ENCODE measurements at regions of chr3 and their contacts with region 1.

Region 1: GRCh38 chr3:17233398-17233800 is 348.6 kb downstream of the PLCL2 start:
- DNase-seq: peak; percentile 84
- H3K4me3 Mint-ChIP-seq: no peak overlapping the region
- H3K27ac Mint-ChIP-seq: no peak overlapping the region
- H3K4me1 Mint-ChIP-seq: peaks cover 12% of the 10 kb centered on the region
- H3K27me3 Mint-ChIP-seq: no peaks in the 10 kb centered on the region

Region 2: GRCh38 chr3:16828815-16829214 is 404.6 kb before region 1 on chr3:
- intact Hi-C with region 1: loop called (anchors 5 kb)
- DNase-seq: peak; percentile 84
- H3K4me3 Mint-ChIP-seq: no peak overlapping the region
- H3K27ac Mint-ChIP-seq: no peak overlapping the region
- H3K4me1 Mint-ChIP-seq: peaks cover 16% of the 10 kb centered on the region
- H3K27me3 Mint-ChIP-seq: peaks cover 9% of the 10 kb centered on the region

Region 3: DNA sequence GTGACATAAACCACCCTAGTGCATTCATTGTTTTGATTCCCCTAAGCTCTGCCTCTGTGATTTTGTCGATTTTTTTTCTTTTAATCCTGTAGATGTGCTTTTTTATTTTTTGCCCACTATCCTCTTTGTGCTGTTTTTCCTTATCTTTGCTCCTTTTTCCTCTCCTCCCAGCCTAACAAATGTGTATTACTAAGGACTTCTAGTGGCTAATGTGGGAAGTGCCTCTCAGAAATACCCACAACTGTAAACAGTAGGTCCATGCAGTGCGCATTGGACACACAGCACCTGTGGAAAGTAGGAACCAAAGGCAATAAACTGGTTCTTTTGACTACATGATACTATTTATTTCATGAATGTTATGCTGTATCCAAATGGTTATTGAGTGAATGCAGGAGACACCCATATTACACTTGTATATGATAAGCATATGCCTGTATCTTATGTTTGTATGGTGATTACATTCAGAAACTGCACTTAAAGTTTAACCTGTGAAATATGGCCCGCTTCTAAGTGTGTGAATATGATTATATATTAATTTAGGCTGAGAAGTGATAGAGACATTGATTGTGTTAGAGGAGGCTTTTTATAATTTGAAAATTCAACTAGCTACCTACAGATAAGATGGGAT is 200.9 kb before region 1 on chr3:
- intact Hi-C with region 1: loop called (anchors 5 kb)
- DNase-seq: peak; percentile 55
- H3K4me3 Mint-ChIP-seq: peak overlapping the region; percentile 1
- H3K27ac Mint-ChIP-seq: peak overlapping the region; percentile 46
- H3K4me1 Mint-ChIP-seq: peaks cover 61% of the 10 kb centered on the region
- H3K27me3 Mint-ChIP-seq: no peaks in the 10 kb centered on the region

Region 4: GRCh38 chr3:17195856-17196604 is 37.4 kb before region 1 on chr3:
- intact Hi-C with region 1: loop called (anchors 5 kb)
- DNase-seq: peak; percentile 44
- H3K4me3 Mint-ChIP-seq: no peak overlapping the region
- H3K27ac Mint-ChIP-seq: no peak overlapping the region
- H3K4me1 Mint-ChIP-seq: peaks cover 13% of the 10 kb centered on the region
- H3K27me3 Mint-ChIP-seq: no peaks in the 10 kb centered on the region